Prostate gland (tissue), 2 donors: ENCODE measurements at regions of chr6 and their contacts with region 1.

Region 1: GRCh38 chr6:31822036-31822821 is 5.3 kb upstream of the HSPA1B start:
- DNase-seq: peak; percentile 89
- H3K4me3 ChIP-seq: peak overlapping the region; percentile 30 to 46
- H3K27ac ChIP-seq: peak overlapping the region; percentile 97 to 100
- H3K4me1 ChIP-seq: peaks cover 22% of the 10 kb centered on the region
- H3K27me3 ChIP-seq: no peaks in the 10 kb centered on the region
- CTCF ChIP-seq: no peak
- POLR2A ChIP-seq: peak; percentile 55

Region 2: GRCh38 chr6:31739639-31740396 is 82.4 kb before region 1 on chr6 and contains the start of gene MSH5:
- intact Hi-C with region 1: loop called (anchors 5 kb)
- DNase-seq: peak; percentile 99
- H3K4me3 ChIP-seq: peak within 1 kb of the TSS; percentile 51 to 56
- H3K27ac ChIP-seq: peak within 1 kb of the TSS; percentile 94 to 98
- H3K4me1 ChIP-seq: peaks cover 11% of the 10 kb centered on the region
- H3K27me3 ChIP-seq: no peaks in the 10 kb centered on the region
- CTCF ChIP-seq: peak in 1 of 4 experiments; percentile 15
- POLR2A ChIP-seq: peak; percentile 77
- total RNA-seq, gene MSH5: 10.5 to 72.4 TPM

Region 3: GRCh38 chr6:32058511-32058963 is 236.3 kb after region 1 on chr6:
- intact Hi-C with region 1: no loop called
- DNase-seq: no peak
- H3K4me3 ChIP-seq: no peak overlapping the region
- H3K27ac ChIP-seq: no peak overlapping the region
- H3K4me1 ChIP-seq: no peaks in the 10 kb centered on the region
- H3K27me3 ChIP-seq: no peaks in the 10 kb centered on the region
- CTCF ChIP-seq: no peak
- POLR2A ChIP-seq: no peak

Region 4: GRCh38 chr6:32203426-32204247 is 381.4 kb after region 1 on chr6:
- intact Hi-C with region 1: no loop called
- DNase-seq: no peak
- H3K4me3 ChIP-seq: no peak overlapping the region
- H3K27ac ChIP-seq: no peak overlapping the region
- H3K4me1 ChIP-seq: no peaks in the 10 kb centered on the region
- H3K27me3 ChIP-seq: no peaks in the 10 kb centered on the region
- CTCF ChIP-seq: no peak
- POLR2A ChIP-seq: no peak